Ascending aorta (tissue), 2 donors: ENCODE measurements at regions of chr3 and their contacts with region 1.

Region 1: GRCh38 chr3:150348500-150348899 is 59.6 kb upstream of the TSC22D2 start:
- DNase-seq: peak in 1 of 2 donors; percentile 84
- H3K4me3 ChIP-seq: no peak overlapping the region
- H3K27ac ChIP-seq: peak overlapping the region; percentile 54 to 55
- H3K4me1 ChIP-seq: peaks cover 0 to 22% of the 10 kb centered on the region in 2 donors
- H3K27me3 ChIP-seq: no peaks in the 10 kb centered on the region
- CTCF ChIP-seq: no peak

Region 2: GRCh38 chr3:150216041-150216811 is 132.3 kb before region 1 on chr3:
- intact Hi-C with region 1: loop called (anchors 5 kb)
- DNase-seq: peak; percentile 33 to 84
- H3K4me3 ChIP-seq: peak overlapping the region in 1 of 2 donors; percentile 39
- H3K27ac ChIP-seq: peak overlapping the region; percentile 75 to 80
- H3K4me1 ChIP-seq: peaks cover 5 to 10% of the 10 kb centered on the region in 2 donors
- H3K27me3 ChIP-seq: no peaks in the 10 kb centered on the region
- CTCF ChIP-seq: no peak

Region 3: DNA sequence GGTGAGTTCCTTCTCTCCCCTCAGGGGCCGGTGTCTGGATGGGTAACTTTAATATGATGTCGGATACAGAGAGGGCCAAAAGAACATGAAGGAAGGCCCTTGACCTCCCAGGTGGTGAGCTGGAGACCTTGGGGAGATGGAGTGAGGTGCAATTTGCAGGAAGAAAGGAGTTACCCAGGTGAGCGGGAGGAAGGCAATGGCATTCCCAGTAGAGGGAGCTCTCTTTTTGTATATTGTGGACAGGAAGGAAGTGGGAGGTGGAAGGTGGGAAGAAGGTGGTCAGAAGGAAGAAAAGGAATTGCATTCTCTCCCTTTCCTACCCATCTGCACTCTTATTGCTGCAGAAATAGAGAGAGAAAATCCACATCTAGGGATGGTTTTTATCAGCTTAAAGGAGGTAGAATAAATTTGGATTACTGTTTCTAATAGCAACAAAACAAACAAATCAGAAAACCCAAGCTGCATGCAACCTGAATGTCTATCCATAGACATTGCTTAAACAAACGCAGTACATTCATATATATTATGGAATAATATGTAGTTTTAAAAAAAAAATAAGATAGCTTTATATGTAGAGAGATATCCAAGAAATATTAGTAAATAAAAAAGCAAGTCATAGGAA is 109.4 kb before region 1 on chr3:
- intact Hi-C with region 1: loop called (anchors 5 kb)
- DNase-seq: no peak
- H3K4me3 ChIP-seq: no peak overlapping the region
- H3K27ac ChIP-seq: peak overlapping the region; percentile 87
- H3K4me1 ChIP-seq: peaks cover 2 to 34% of the 10 kb centered on the region in 2 donors
- H3K27me3 ChIP-seq: no peaks in the 10 kb centered on the region
- CTCF ChIP-seq: peak in 1 of 3 experiments; percentile 14

Region 4: GRCh38 chr3:150443331-150443741 is 94.8 kb after region 1 on chr3:
- intact Hi-C with region 1: no loop called
- DNase-seq: no peak
- H3K4me3 ChIP-seq: no peak overlapping the region
- H3K27ac ChIP-seq: no peak overlapping the region
- H3K4me1 ChIP-seq: peaks cover 0 to 17% of the 10 kb centered on the region in 2 donors
- H3K27me3 ChIP-seq: no peaks in the 10 kb centered on the region
- CTCF ChIP-seq: no peak